Thyroid gland (tissue), 4 donors: ENCODE measurements at regions of chr20 and their contacts with region 1.

Region 1: GRCh38 chr20:48904365-48905296 is 16.9 kb upstream of the ARFGEF2 start:
- DNase-seq: peak; percentile 57 to 66
- H3K4me3 ChIP-seq: no peak overlapping the region
- H3K27ac ChIP-seq: no peak overlapping the region
- H3K4me1 ChIP-seq: peaks cover 0 to 4% of the 10 kb centered on the region in 2 donors
- H3K27me3 ChIP-seq: no peaks in the 10 kb centered on the region
- CTCF ChIP-seq: peak; percentile 73 to 89 (median 81)
- POLR2A ChIP-seq: no peak

Region 2: GRCh38 chr20:48482790-48483699 is 421.6 kb before region 1 on chr20:
- intact Hi-C with region 1: no loop called
- DNase-seq: no peak
- H3K4me3 ChIP-seq: no peak overlapping the region
- H3K27ac ChIP-seq: no peak overlapping the region
- H3K4me1 ChIP-seq: no peaks in the 10 kb centered on the region
- H3K27me3 ChIP-seq: no peaks in the 10 kb centered on the region
- CTCF ChIP-seq: no peak
- POLR2A ChIP-seq: no peak

Region 3: DNA sequence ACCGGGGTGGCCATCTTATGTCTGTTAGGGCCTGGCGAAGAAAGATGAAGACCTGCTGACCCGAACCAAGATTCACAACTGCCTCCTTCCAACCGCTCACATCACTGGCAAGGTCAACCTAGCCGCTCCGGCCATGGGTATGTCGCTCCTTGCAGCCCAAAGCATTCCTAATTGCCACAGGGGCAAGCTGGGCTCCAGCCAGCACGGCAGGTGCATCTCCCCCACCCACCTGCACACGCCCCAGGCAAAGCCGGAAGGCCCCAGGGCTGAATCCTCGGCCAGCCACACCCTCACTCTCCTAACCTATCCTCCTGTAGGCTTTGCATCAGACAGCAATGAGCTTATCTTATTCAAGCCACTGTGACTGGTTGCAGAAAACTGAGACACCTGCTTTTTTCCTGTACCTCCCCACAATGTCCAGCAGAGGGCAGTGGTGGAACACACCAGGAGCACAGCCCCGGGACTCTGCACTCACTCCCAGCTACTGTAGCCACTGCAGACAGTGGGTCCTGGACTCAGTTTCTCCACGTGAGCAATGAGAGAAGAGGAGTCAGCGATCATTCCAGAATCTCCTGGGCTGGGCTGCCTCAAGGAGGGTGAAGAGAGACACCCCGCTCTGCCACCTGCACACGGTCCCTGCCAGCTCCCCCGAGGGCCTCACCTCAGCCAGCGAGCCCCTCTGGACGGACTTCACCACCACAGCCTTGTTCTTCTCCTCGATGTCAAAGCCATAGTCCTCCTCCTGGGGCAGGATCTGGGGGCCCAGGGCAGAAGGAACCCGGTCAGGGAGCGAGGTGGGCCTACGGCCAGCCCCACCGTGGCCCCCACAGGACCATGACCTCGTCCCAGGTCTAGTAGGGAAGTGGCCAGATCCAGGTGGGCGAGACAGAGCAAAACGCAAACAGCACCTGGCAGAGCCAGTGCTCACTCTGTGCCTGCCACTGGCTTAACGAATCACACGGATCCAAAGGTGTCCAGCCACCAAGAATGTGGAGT is 246.9 kb before region 1 on chr20:
- intact Hi-C with region 1: loop called (anchors 2 kb)
- DNase-seq: peak; percentile 61 to 69
- H3K4me3 ChIP-seq: no peak overlapping the region
- H3K27ac ChIP-seq: no peak overlapping the region
- H3K4me1 ChIP-seq: no peaks in the 10 kb centered on the region
- H3K27me3 ChIP-seq: no peaks in the 10 kb centered on the region
- CTCF ChIP-seq: peak; percentile 83 to 97 (median 94)
- POLR2A ChIP-seq: no peak